A673 (cell line): ENCODE measurements at regions of chr20 and their contacts with region 1.

Region 1: GRCh38 chr20:21235484-21236445 is 67.4 kb upstream of the XRN2 start:
- DNase-seq: peak; percentile 80
- H3K4me3 ChIP-seq: peak overlapping the region; percentile 22
- H3K27ac ChIP-seq: no peak overlapping the region
- H3K4me1 ChIP-seq: peaks cover 14% of the 10 kb centered on the region
- H3K27me3 ChIP-seq: no peaks in the 10 kb centered on the region
- CTCF ChIP-seq: peak; percentile 96

Region 2: GRCh38 chr20:20860078-20860806 is 375.5 kb before region 1 on chr20:
- CTCF ChIA-PET with region 1: interaction called, 11 read pairs
- POLR2A ChIA-PET with region 1: no interaction called
- intact Hi-C with region 1: loop called (anchors 5 kb)
- DNase-seq: peak; percentile 93
- H3K4me3 ChIP-seq: no peak overlapping the region
- H3K27ac ChIP-seq: no peak overlapping the region
- H3K4me1 ChIP-seq: no peaks in the 10 kb centered on the region
- H3K27me3 ChIP-seq: no peaks in the 10 kb centered on the region
- CTCF ChIP-seq: peak; percentile 97

Region 3: GRCh38 chr20:21505161-21505809 is 269.5 kb after region 1 on chr20:
- CTCF ChIA-PET with region 1: interaction called, 25 read pairs
- POLR2A ChIA-PET with region 1: no interaction called
- intact Hi-C with region 1: loop called (anchors 1 kb)
- DNase-seq: peak; percentile 77
- H3K4me3 ChIP-seq: peak overlapping the region; percentile 46
- H3K27ac ChIP-seq: peak overlapping the region; percentile 68
- H3K4me1 ChIP-seq: peaks cover 37% of the 10 kb centered on the region
- H3K27me3 ChIP-seq: no peaks in the 10 kb centered on the region
- CTCF ChIP-seq: peak; percentile 97

Region 4: GRCh38 chr20:21615617-21616080 is 379.9 kb after region 1 on chr20:
- CTCF ChIA-PET with region 1: interaction called, 16 read pairs
- POLR2A ChIA-PET with region 1: no interaction called
- intact Hi-C with region 1: loop called (anchors 2 kb)
- DNase-seq: peak; percentile 87
- H3K4me3 ChIP-seq: no peak overlapping the region
- H3K27ac ChIP-seq: peak overlapping the region; percentile 64
- H3K4me1 ChIP-seq: peaks cover 32% of the 10 kb centered on the region
- H3K27me3 ChIP-seq: no peaks in the 10 kb centered on the region
- CTCF ChIP-seq: peak; percentile 98